Colonic mucosa (tissue), 4 donors: ENCODE measurements at regions of chr3 and their contacts with region 1.

Region 1: DNA sequence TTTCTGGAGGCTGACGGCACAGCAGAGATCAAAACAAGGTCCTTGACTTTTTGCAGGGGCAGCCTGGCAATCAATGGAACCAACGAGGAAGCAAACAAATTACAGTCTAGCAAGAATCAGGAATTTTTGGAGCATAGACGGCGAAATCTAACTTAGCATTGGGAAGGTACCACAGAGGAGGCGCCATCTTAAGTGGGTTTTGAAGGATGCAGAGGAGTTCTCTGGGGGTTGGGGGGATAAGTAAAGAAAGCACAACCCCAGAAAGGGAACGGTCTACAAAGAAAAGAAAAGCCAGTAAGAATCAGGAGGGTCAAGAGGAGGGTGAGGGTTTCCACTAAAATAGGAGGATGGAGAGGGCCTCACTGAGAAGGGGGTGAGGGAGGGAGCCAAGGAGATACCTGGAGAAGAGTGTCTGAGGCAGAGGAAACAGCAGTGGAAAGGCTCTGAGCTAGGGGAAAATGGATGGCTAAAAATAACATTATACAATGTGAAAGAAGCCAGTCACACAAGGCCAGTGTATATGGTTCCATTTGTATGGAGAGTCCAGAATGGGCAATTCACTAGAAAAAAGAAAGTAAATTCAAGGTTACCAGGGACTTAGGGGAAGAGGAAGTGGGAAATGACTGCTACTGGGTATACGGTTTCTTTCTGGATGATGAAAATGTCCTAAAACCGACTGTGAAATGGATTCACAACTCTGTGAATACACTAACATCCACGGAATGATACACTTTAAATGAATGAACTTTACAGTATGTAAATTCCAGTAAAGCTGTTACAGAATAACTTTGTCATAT is 25.2 kb upstream of the IQSEC1 start:
- DNase-seq: no peak
- H3K4me3 ChIP-seq: no peak overlapping the region
- H3K27ac ChIP-seq: no peak overlapping the region
- H3K4me1 ChIP-seq: no peaks in the 10 kb centered on the region
- H3K27me3 ChIP-seq: no peaks in the 10 kb centered on the region
- CTCF ChIP-seq: no peak

Region 2: DNA sequence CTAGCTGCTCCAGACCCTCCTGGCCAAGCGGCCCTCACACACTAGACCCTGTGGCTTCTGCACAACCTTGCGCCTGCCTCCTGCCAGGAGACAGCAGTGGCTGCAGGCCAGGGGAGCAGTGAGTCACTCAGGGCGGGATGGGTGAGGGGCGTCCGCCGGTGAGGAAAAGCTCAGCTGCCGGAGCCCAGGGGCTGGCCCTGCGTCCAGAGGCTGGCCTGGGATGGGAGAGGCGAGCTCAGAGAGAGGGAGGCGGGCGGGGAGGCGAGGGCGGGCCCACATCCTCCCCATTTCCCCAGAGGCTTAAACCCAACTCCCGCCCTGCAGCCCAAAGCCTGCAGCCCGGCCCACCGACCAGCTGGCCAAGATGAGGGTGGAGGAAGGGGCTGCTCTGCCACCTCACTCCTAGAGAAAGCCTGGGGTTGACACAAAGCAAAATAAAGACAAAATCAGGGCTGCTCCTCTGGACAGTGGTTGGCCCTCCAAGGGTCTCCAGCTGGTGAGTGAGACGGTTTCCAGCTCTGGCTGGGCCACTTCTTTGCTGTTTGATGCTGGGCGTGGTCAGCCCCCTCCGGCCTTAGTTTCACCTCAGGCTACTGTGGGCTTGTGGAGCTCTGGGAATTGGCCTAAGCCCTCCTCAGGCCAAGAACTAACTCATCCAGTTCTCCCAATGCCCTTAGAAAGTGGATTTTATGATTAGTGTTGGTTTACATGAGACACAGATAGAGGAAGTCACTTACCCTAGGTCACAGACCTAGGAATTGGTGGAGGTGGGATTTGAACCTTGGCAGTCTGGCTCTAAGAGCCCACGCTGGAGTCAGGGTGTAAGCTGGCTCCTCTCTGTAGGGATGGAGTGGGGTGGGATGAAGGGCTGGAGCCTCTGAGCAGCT is 75.8 kb before region 1 on chr3:
- intact Hi-C with region 1: loop called (anchors 2 kb)
- DNase-seq: peak; percentile 51
- H3K4me3 ChIP-seq: peak overlapping the region; percentile 22
- H3K27ac ChIP-seq: no peak overlapping the region
- H3K4me1 ChIP-seq: no peaks in the 10 kb centered on the region
- H3K27me3 ChIP-seq: no peaks in the 10 kb centered on the region
- CTCF ChIP-seq: no peak

Region 3: GRCh38 chr3:13324835-13325501 is 226.6 kb after region 1 on chr3:
- intact Hi-C with region 1: no loop called
- DNase-seq: no peak
- H3K4me3 ChIP-seq: no peak overlapping the region
- H3K27ac ChIP-seq: no peak overlapping the region
- H3K4me1 ChIP-seq: no peaks in the 10 kb centered on the region
- H3K27me3 ChIP-seq: no peaks in the 10 kb centered on the region
- CTCF ChIP-seq: no peak

Region 4: GRCh38 chr3:13895155-13896105 is 797.0 kb after region 1 on chr3:
- intact Hi-C with region 1: no loop called
- DNase-seq: peak; percentile 96
- H3K4me3 ChIP-seq: peak overlapping the region; percentile 47
- H3K27ac ChIP-seq: no peak overlapping the region
- H3K4me1 ChIP-seq: no peaks in the 10 kb centered on the region
- H3K27me3 ChIP-seq: no peaks in the 10 kb centered on the region
- CTCF ChIP-seq: no peak